HAP-1 (cell line): ENCODE measurements at regions of chr1 and their contacts with region 1.

Region 1: DNA sequence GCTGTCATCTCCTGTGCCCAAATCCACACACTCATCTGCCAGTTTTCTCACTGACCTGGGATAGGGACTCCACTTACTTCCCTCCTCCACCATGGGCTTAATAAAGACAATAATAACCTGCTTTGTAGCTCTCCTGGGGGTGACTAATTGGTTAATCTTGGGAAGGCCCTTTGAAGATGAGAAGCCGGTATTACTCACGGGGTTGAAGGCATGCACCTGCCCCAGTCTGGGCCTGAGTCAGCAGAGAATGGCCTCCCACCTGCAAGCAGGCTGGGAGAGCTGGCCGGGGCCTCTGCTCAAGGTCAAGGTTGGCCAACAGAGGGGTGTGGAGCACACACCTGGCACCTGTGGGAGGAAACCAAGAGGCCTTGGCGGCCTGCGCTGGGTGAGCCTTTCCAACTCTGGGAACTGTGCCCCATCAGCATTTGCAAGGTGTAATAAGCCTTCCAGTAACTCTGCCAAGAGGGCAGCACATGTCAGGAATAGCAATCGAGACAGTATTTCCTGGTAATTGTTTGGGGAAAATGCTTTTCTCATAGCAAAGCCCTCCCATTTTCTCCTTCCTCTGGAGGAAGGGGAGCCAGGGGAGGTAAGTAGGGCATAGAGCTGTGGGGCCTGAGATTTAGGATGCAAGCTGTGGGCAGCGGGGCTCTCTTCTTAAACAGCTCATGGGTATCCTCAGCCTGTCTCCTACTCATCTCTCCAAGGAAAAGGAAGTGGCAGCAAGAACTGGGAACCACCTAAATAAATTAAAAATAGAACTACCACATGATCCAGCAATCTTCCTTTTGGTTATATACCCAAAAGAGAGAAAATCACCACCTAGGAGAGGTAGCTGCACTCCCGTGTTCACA is 49.0 kb downstream of the TOMM20 start:
- DNase-seq: no peak
- H3K4me3 ChIP-seq: no peak overlapping the region
- H3K4me1 ChIP-seq: peaks cover 7% of the 10 kb centered on the region
- H3K27me3 ChIP-seq: no peaks in the 10 kb centered on the region

Region 2: GRCh38 chr1:234499119-234499942 is 580.3 kb before region 1 on chr1:
- in situ Hi-C with region 1: loop called (anchors 5 kb)
- DNase-seq: peak; percentile 78 to 92
- H3K4me3 ChIP-seq: no peak overlapping the region
- H3K4me1 ChIP-seq: peaks cover 49% of the 10 kb centered on the region
- H3K27me3 ChIP-seq: no peaks in the 10 kb centered on the region

Region 3: GRCh38 chr1:234610348-234611152 is 469.1 kb before region 1 on chr1:
- in situ Hi-C with region 1: loop called (anchors 5 kb)
- DNase-seq: peak; percentile 82 to 93
- H3K4me3 ChIP-seq: peak overlapping the region; percentile 39
- H3K4me1 ChIP-seq: peaks cover 36% of the 10 kb centered on the region
- H3K27me3 ChIP-seq: no peaks in the 10 kb centered on the region

Region 4: GRCh38 chr1:234730770-234731568 is 348.7 kb before region 1 on chr1:
- in situ Hi-C with region 1: loop called (anchors 10 kb)
- DNase-seq: no peak
- H3K4me3 ChIP-seq: no peak overlapping the region
- H3K4me1 ChIP-seq: no peaks in the 10 kb centered on the region
- H3K27me3 ChIP-seq: no peaks in the 10 kb centered on the region

Region 5: GRCh38 chr1:234918181-234918841 is 161.4 kb before region 1 on chr1:
- in situ Hi-C with region 1: loop called (anchors 10 kb)
- DNase-seq: peak; percentile 39 to 57
- H3K4me3 ChIP-seq: no peak overlapping the region
- H3K4me1 ChIP-seq: peaks cover 26% of the 10 kb centered on the region
- H3K27me3 ChIP-seq: no peaks in the 10 kb centered on the region

Region 6: GRCh38 chr1:235246022-235246991 is 166.6 kb after region 1 on chr1:
- in situ Hi-C with region 1: no loop called
- DNase-seq: no peak
- H3K4me3 ChIP-seq: no peak overlapping the region
- H3K4me1 ChIP-seq: no peaks in the 10 kb centered on the region
- H3K27me3 ChIP-seq: no peaks in the 10 kb centered on the region